T-cell (primary cell): ENCODE measurements at regions of chr9 and their contacts with region 1.

Region 1: DNA sequence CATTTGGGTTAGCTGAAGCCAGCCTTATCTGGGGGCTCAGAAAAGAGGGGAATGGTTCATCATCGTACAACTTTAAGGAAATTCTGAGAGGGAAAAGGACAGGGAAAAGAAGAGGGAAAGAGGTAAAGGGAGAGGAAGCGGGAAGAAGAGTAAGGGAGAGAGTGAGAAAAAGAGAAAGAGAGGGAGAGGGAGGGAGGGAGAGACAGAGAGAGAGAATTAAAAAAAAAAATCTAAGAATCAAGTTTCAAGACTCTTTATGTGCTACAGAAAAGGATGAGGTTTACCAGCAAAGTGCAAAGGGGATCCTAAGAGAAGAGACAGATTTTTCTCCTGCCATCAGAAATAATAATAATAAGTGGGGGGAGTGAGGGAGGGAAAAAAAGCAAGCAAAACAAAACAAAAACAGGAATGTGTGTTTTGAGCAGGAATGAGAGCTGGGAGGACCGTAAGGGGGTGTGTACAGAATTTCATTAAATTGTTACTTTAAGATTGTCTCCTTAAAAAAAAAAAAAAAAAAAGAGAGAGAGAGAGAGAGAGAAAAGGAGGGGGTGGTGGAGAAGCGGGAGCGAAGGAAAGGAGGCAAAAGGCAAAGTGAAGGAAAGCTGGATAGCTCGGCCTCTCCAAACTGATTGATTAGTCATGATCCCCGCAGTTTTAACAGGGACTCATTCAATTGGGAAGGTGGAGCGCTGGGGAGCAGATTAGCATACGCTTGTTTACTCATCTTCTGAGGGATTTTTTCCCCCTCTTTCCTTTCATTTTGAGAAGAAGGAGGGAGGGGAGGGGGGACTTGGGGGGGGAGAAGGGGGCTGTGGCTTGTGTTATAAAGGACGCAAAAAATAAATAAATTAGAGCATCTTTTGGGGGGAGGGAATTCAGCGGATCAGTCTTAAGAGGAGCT is at the start of gene PAPPA:
- DNase-seq: no peak
- ATAC-seq: no peak
- H3K4me3 ChIP-seq: no peak within 1 kb of the TSS
- H3K4me3 Mint-ChIP-seq: peak within 1 kb of the TSS in 1 of 3 donors; percentile 32
- H3K27ac ChIP-seq: no peak within 1 kb of the TSS
- H3K27ac Mint-ChIP-seq: no peak within 1 kb of the TSS
- H3K4me1 ChIP-seq: no peaks in the 10 kb centered on the region
- H3K4me1 Mint-ChIP-seq: peaks cover 13 to 14% (median 13%) of the 10 kb centered on the region in 3 donors
- H3K27me3 ChIP-seq: peaks cover 26 to 30% of the 10 kb centered on the region in 2 experiments
- H3K27me3 Mint-ChIP-seq: peaks cover 59 to 74% of the 10 kb centered on the region in 2 donors
- total RNA-seq, gene PAPPA: 0.03 to 0.09 (median 0.07) TPM in 3 of 5 donors, not detected in the others

Region 2: DNA sequence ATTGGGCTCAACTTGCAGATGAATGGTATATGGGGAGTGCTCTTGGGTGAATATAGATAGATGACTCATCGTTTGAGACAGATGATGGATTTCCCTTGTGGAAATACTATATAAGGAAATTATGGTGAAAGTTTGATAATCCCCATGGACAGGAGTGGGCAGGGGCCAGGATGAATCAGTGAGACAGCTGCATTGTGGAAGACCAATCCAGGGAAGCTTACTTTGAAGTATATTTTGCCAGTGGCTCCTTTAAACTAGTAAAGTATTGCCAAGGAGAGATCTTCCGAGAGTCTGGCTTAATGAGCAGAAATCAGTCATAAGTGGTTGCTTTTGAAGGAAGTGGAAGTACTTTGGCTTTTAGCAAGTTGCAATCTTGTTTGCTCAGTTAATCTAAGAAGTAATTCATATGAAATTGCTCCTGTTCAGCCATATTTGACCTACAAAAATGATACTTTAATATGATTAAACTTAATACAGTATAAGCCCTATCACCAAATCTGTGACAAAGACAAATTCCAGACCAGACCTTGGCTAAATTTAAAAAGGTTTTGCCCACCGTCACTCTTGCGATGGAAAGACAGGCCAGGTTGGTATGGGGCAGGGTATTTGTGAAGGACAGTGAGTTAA is 1025.9 kb before region 1 on chr9:
- CTCF ChIA-PET with region 1: no interaction called
- POLR2A ChIA-PET with region 1: interaction called in 1 of 2 experiments, 12 read pairs
- DNase-seq: no peak
- ATAC-seq: no peak
- H3K4me3 ChIP-seq: no peak overlapping the region
- H3K4me3 Mint-ChIP-seq: no peak overlapping the region
- H3K27ac ChIP-seq: no peak overlapping the region
- H3K27ac Mint-ChIP-seq: no peak overlapping the region
- H3K4me1 ChIP-seq: no peaks in the 10 kb centered on the region
- H3K4me1 Mint-ChIP-seq: no peaks in the 10 kb centered on the region
- H3K27me3 ChIP-seq: peaks cover 0 to 2% of the 10 kb centered on the region in 2 experiments
- H3K27me3 Mint-ChIP-seq: peaks cover 20 to 32% of the 10 kb centered on the region in 2 donors

Region 3: DNA sequence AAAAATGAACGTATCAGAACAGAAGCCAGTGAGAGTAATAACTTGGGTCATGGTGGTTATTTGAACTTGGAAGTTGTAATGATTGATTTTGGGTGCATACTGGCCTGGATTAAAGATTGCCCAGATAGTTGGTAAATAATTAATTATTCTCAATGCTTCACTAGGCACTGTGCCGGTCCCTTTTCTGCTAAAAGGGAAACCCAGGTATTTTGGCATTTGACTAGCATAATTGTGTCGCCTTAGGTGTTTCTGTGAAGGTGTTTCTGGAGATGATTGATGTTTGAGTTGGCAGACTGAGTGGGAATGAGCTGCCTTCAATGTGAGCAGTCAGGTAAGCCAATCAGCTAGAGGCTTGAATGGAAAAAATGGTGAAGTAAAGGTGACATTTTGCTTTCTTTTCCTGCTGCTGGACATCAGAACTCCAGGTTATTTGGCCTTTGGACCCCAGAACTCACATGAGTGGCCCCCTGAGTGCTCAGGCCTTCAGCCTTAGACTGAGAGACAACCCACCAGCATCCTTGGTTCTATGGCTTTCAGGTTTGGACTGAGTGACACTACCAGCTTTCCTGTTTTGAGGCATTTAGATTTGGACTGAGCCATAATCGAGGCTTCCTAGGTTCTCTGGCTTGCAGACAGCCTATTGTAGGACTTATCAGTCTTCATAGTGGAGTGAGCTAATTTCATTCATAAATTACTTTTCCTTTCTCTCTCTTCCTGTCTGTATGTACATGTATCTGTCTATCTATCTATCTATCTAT is 120.3 kb before region 1 on chr9:
- CTCF ChIA-PET with region 1: no interaction called
- POLR2A ChIA-PET with region 1: no interaction called
- DNase-seq: no peak
- ATAC-seq: no peak
- H3K4me3 ChIP-seq: no peak overlapping the region
- H3K4me3 Mint-ChIP-seq: no peak overlapping the region
- H3K27ac ChIP-seq: no peak overlapping the region
- H3K27ac Mint-ChIP-seq: no peak overlapping the region
- H3K4me1 ChIP-seq: no peaks in the 10 kb centered on the region
- H3K4me1 Mint-ChIP-seq: no peaks in the 10 kb centered on the region
- H3K27me3 ChIP-seq: no peaks in the 10 kb centered on the region
- H3K27me3 Mint-ChIP-seq: no peaks in the 10 kb centered on the region